ENCODE measurements at regions of chr3 and their contacts with region 1.

Region 1: GRCh38 chr3:143885780-143886427 is 37.6 kb upstream of the SLC9A9 start:
- DNase-seq: peak; percentile 53
- ATAC-seq: peak; percentile 64
- H3K4me3 ChIP-seq: no peak overlapping the region
- H3K27ac ChIP-seq: no peak overlapping the region
- H3K4me1 ChIP-seq: no peaks in the 10 kb centered on the region
- H3K27me3 ChIP-seq: no peaks in the 10 kb centered on the region
- CTCF ChIP-seq: peak; percentile 70

Region 2: GRCh38 chr3:143380449-143380848 is 505.5 kb before region 1 on chr3:
- CTCF ChIA-PET with region 1: no interaction called
- POLR2A ChIA-PET with region 1: no interaction called
- intact Hi-C with region 1: no loop called
- DNase-seq: no peak
- ATAC-seq: no peak
- H3K4me3 ChIP-seq: no peak overlapping the region
- H3K27ac ChIP-seq: no peak overlapping the region
- H3K4me1 ChIP-seq: no peaks in the 10 kb centered on the region
- H3K27me3 ChIP-seq: no peaks in the 10 kb centered on the region
- CTCF ChIP-seq: no peak

Region 3: DNA sequence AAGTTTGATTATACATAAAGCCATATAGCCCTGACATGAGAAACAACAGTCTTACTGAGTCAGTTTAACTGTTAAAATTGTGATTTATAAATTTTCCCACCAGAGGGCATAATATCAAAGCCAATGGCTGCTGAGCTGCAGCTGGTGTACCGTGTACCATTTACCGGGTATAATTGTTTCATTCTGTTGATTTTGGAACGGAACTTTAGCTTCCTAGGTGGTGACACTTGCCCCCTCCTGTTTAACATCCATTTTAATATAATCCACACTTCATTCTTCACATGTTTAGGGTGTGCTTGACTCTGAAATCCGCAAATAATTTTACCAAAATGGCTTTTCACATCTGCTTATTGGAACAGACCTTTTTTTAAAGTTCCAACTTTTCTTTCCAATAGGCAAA is 110.4 kb before region 1 on chr3:
- CTCF ChIA-PET with region 1: no interaction called
- POLR2A ChIA-PET with region 1: no interaction called
- intact Hi-C with region 1: loop called (anchors 10 kb)
- DNase-seq: peak; percentile 61
- ATAC-seq: peak; percentile 77
- H3K4me3 ChIP-seq: no peak overlapping the region
- H3K27ac ChIP-seq: no peak overlapping the region
- H3K4me1 ChIP-seq: no peaks in the 10 kb centered on the region
- H3K27me3 ChIP-seq: no peaks in the 10 kb centered on the region
- CTCF ChIP-seq: peak; percentile 66

Region 4: GRCh38 chr3:143951351-143951971 is 65.6 kb after region 1 on chr3:
- CTCF ChIA-PET with region 1: no interaction called
- POLR2A ChIA-PET with region 1: no interaction called
- intact Hi-C with region 1: no loop called
- DNase-seq: peak; percentile 54
- ATAC-seq: no peak
- H3K4me3 ChIP-seq: no peak overlapping the region
- H3K27ac ChIP-seq: no peak overlapping the region
- H3K4me1 ChIP-seq: no peaks in the 10 kb centered on the region
- H3K27me3 ChIP-seq: no peaks in the 10 kb centered on the region
- CTCF ChIP-seq: peak; percentile 75

Region 5: DNA sequence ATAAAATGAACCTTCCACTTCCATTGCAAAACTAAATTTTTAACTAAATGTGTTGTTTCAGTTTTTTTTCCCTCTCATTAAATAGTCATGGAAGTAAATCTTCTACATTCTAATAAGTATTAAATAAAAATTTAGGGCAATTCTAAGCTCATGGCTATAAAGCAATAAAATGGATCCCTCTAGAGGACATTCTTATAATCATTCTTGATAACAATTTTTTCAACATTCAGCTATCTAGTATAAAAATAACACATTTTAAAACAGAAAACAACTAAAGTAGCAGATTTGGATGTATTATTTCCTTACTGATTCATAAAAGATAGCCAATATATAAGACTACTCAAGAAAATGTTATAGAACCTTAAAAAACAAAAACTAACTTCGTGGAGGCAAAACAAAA is 1882.0 kb after region 1 on chr3:
- CTCF ChIA-PET with region 1: no interaction called
- POLR2A ChIA-PET with region 1: no interaction called
- intact Hi-C with region 1: loop called (anchors 10 kb)
- DNase-seq: peak; percentile 23
- ATAC-seq: no peak
- H3K4me3 ChIP-seq: no peak overlapping the region
- H3K27ac ChIP-seq: no peak overlapping the region
- H3K4me1 ChIP-seq: no peaks in the 10 kb centered on the region
- H3K27me3 ChIP-seq: no peaks in the 10 kb centered on the region
- CTCF ChIP-seq: peak; percentile 54